HepG2 (cell line): ENCODE measurements at regions of chr20 and their contacts with region 1.

Region 1: DNA sequence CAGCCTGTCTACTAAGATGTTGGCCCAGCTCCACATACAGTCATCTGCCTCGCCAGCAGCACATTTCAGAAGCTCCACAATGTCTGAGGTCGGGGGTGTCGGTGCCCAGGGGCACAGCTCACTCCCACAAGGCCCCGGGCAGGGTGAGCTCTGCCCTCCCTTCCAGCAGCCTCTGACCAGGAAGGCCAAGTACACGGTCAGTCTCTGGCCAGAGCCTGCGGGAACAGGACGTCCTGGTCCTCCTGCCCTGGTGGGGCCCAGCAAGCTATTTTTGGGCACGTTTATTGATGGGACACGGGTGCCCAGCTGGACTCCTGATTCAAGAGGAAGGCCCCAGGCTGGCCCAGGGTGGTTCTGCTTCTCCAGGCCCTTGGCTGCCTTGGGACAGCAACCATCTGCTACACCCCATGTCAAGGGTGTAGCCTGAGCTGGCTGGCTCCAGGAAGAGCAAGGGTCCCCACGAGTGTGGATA is 114.9 kb upstream of the PTPN1 start:
- DNase-seq: no peak
- ATAC-seq: no peak
- H3K4me3 ChIP-seq: no peak overlapping the region
- H3K27ac ChIP-seq: peak overlapping the region; percentile 23
- H3K4me1 ChIP-seq: peaks cover 95% of the 10 kb centered on the region
- H3K27me3 ChIP-seq: no peaks in the 10 kb centered on the region
- CTCF ChIP-seq: no peak
- EP300 ChIP-seq: no peak
- POLR2A ChIP-seq: no peak
- RAD21 ChIP-seq: no peak

Region 2: GRCh38 chr20:50278674-50279531 is 116.4 kb before region 1 on chr20:
- CTCF ChIA-PET with region 1: no interaction called
- POLR2A ChIA-PET with region 1: interaction called, 25 read pairs
- in situ Hi-C with region 1: no loop called
- intact Hi-C with region 1: no loop called
- DNase-seq: peak; percentile 87
- ATAC-seq: peak; percentile 72
- H3K4me3 ChIP-seq: peak overlapping the region in 2 of 3 experiments; percentile 2 to 36; a peak in 1 of 6 replicates
- H3K27ac ChIP-seq: no peak overlapping the region
- H3K4me1 ChIP-seq: peaks cover 96% of the 10 kb centered on the region
- H3K27me3 ChIP-seq: no peaks in the 10 kb centered on the region
- CTCF ChIP-seq: peak; percentile 89
- EP300 ChIP-seq: peak in 1 of 2 experiments; percentile 47; a peak in 1 of 4 replicates
- POLR2A ChIP-seq: no peak
- RAD21 ChIP-seq: peak; percentile 96

Region 3: DNA sequence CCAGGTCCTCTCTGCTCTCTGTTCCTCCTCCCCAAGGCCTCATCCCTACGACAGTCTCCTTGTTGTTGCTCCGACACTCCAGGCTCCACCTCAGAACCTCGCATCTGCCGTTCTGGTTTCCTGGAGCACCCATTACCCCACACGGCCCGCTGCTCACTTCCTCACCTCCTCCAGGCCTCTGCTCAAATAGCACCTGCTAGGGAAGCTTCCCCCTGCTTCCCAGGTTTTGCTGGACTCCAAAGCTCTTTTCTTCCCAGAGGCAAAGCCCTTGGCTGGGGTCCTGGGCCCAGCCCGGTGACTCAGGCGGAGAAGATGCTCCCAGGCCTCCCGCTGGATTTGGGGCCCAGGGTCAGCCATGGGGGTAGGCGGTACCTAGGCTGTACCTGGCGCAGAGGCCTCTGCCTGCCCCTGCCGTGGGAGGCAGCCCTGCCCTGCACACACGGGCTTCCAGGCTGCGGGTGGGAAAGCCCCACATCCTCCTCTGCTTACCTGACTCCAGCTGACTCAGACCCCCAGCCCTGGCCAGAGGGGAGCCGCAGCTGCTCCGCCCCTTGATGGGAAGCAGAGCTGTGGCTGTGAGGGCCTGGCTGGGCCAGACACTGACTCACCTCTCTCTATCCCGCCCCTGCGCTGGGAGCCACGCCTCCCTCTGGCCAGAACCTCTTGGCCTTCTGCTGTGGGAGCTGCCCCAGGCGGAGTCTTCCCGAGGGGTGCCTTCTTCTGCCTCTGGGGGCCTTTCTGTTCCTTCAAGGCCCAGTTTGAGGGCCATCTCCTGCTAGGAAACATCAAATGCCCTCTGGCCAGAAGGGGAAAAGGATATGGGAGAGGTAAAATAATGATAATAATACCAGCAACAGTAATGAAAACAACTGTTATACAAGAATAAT is 74.1 kb before region 1 on chr20:
- CTCF ChIA-PET with region 1: no interaction called
- POLR2A ChIA-PET with region 1: interaction called, 29 read pairs
- in situ Hi-C with region 1: no loop called
- intact Hi-C with region 1: no loop called
- DNase-seq: peak; percentile 85
- ATAC-seq: peak; percentile 95
- H3K4me3 ChIP-seq: peak overlapping the region; percentile 54 to 87 (median 62)
- H3K27ac ChIP-seq: peak overlapping the region; percentile 11
- H3K4me1 ChIP-seq: peaks cover 56% of the 10 kb centered on the region
- H3K27me3 ChIP-seq: no peaks in the 10 kb centered on the region; a peak in 2 of 5 replicates
- CTCF ChIP-seq: peak; percentile 59
- EP300 ChIP-seq: peak; percentile 18 to 47; a peak in 2 of 4 replicates
- POLR2A ChIP-seq: peak; percentile 16 to 86; a peak in 3 of 4 replicates
- RAD21 ChIP-seq: peak; percentile 49; the same call in 1 of the 2 replicates

Region 4: GRCh38 chr20:50379049-50379990 is 16.0 kb before region 1 on chr20:
- CTCF ChIA-PET with region 1: no interaction called
- POLR2A ChIA-PET with region 1: interaction called, 13 read pairs
- in situ Hi-C with region 1: no loop called
- intact Hi-C with region 1: no loop called
- DNase-seq: no peak
- ATAC-seq: no peak
- H3K4me3 ChIP-seq: peak overlapping the region in 1 of 3 experiments; percentile 12; a peak in 1 of 6 replicates
- H3K27ac ChIP-seq: peak overlapping the region; percentile 4
- H3K4me1 ChIP-seq: peaks cover 86% of the 10 kb centered on the region
- H3K27me3 ChIP-seq: no peaks in the 10 kb centered on the region
- CTCF ChIP-seq: no peak
- EP300 ChIP-seq: no peak
- POLR2A ChIP-seq: no peak
- RAD21 ChIP-seq: no peak

Region 5: DNA sequence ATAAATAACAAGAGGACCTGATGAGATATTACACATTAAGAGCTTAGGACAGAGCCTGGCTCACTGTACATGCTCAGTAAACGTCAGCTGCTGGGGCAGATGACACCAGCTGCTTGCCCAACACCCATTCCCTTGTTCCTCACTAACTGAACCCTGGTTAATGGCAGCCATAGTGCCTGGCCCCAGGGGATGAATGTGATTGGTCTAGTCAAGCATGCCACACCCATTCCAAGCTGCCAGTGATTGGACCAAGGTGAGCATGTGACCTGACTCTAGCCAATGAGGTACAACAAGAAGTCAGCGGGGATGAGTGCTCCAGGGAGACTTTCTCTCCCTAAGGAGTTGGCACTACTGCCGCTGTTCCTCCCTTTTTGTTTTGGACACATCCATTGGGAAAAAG is 29.8 kb after region 1 on chr20:
- CTCF ChIA-PET with region 1: interaction called, 3 read pairs
- POLR2A ChIA-PET with region 1: interaction called, 79 read pairs
- in situ Hi-C with region 1: no loop called
- intact Hi-C with region 1: no loop called
- DNase-seq: peak; percentile 61
- ATAC-seq: peak; percentile 12; the same call in 2 of the 3 replicates
- H3K4me3 ChIP-seq: no peak overlapping the region
- H3K27ac ChIP-seq: no peak overlapping the region
- H3K4me1 ChIP-seq: peaks cover 84% of the 10 kb centered on the region
- H3K27me3 ChIP-seq: no peaks in the 10 kb centered on the region
- CTCF ChIP-seq: no peak
- EP300 ChIP-seq: no peak
- POLR2A ChIP-seq: no peak
- RAD21 ChIP-seq: no peak

Region 6: GRCh38 chr20:50460460-50461267 is 65.4 kb after region 1 on chr20:
- CTCF ChIA-PET with region 1: interaction called, 10 read pairs
- POLR2A ChIA-PET with region 1: interaction called, 46 read pairs
- in situ Hi-C with region 1: loop called (anchors 5 kb)
- intact Hi-C with region 1: loop called (anchors 1 kb)
- DNase-seq: peak; percentile 91
- ATAC-seq: peak; percentile 85
- H3K4me3 ChIP-seq: peak overlapping the region; percentile 15 to 64 (median 35); a peak in 5 of 6 replicates
- H3K27ac ChIP-seq: peak overlapping the region; percentile 45
- H3K4me1 ChIP-seq: peaks cover 89% of the 10 kb centered on the region
- H3K27me3 ChIP-seq: no peaks in the 10 kb centered on the region
- CTCF ChIP-seq: peak; percentile 100
- EP300 ChIP-seq: peak in 1 of 2 experiments; percentile 60; a peak in 3 of 4 replicates
- POLR2A ChIP-seq: peak in 1 of 2 experiments; percentile 28; a peak in 1 of 4 replicates
- RAD21 ChIP-seq: peak; percentile 100

Region 7: DNA sequence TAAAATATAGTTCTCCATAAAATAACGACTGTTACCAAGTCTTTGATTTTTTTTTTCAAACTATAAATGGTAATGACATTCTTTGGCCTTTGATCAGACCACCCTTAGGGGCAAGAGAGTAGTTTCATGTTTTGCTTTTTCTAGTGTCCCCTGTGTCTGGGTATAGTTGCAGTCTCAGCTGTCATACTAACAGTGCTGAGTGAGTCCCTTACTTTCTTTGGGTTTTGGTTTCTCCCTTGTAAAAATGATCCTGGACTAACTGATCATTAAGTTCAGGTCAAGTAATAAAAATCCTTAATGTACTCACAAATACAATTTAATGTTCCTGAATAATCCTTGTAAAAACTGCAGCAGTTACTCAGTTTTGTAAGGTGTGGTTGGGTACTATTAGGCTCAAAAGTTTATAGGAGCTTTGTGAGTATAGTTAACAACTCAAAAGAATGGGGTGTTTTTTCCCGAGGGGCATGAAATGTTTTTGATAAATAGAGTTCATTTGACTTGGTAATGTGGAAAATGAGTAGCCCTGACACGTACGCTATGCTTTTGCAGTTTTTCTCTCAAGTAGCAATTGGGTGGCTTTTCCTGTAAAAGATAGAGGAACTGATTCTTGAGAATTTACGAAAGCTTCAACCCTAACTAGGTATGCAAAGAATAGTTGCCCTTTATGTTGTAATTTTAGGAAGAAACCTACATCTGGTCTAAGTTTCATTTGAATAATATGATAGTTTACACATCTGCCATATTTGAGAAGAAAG is 121.1 kb after region 1 on chr20:
- CTCF ChIA-PET with region 1: no interaction called
- POLR2A ChIA-PET with region 1: no interaction called
- in situ Hi-C with region 1: no loop called
- intact Hi-C with region 1: no loop called
- DNase-seq: no peak
- ATAC-seq: no peak
- H3K4me3 ChIP-seq: no peak overlapping the region
- H3K27ac ChIP-seq: no peak overlapping the region
- H3K4me1 ChIP-seq: peaks cover 54% of the 10 kb centered on the region
- H3K27me3 ChIP-seq: no peaks in the 10 kb centered on the region
- CTCF ChIP-seq: no peak
- EP300 ChIP-seq: no peak
- POLR2A ChIP-seq: no peak
- RAD21 ChIP-seq: no peak